Heart right ventricle (tissue), 16 donors: ENCODE measurements at regions of chrX and their contacts with region 1.

Region 1: DNA sequence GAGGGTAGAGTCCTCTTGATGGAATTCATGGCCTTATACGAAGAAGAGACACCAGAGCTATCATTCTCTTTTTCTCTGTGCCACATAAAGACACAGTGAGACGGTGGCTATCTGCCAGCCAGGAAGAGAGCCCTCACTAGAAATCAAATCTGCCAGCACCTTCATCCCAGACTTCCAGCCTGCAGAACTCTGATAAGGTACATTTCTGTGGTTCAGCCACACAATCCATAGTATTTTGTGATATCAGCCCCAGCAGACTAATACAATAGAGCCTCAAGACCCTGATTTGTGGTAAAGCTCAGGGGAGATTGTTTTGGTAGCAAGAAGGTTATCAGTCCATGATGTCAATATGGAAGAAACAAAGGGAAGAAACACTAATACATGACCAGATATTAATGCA is 1213.2 kb downstream of the NLGN4X start:
- DNase-seq: no peak
- ATAC-seq: no peak
- H3K4me3 ChIP-seq: no peak overlapping the region
- H3K27ac ChIP-seq: no peak overlapping the region
- H3K4me1 ChIP-seq: no peaks in the 10 kb centered on the region
- H3K27me3 ChIP-seq: no peaks in the 10 kb centered on the region
- CTCF ChIP-seq: no peak

Region 2: GRCh38 chrX:4484266-4484665 is 531.2 kb before region 1 on chrX:
- intact Hi-C with region 1: no loop called
- DNase-seq: no peak
- ATAC-seq: no peak
- H3K4me3 ChIP-seq: no peak overlapping the region
- H3K27ac ChIP-seq: no peak overlapping the region
- H3K4me1 ChIP-seq: no peaks in the 10 kb centered on the region
- H3K27me3 ChIP-seq: no peaks in the 10 kb centered on the region
- CTCF ChIP-seq: no peak

Region 3: DNA sequence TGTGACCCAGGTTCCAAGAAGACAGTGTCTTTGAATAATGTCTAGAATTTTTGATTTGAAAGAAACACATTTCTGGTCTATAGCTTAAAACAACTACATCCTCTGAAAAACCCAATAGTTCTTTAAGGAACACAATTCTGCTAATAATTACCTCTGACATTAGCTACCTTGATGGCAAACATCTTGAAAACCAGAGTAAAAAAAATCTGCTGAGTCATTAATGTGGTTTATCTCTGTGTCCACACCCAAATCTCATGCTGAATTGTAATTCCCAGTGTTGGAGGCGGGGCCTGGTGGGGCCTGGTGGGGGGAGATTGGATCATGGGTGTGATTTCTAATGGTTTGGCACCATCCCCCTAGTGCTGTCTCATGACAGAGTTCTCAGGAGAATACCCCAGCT is 20.6 kb before region 1 on chrX:
- intact Hi-C with region 1: loop called in 1 of 10 experiments (anchors 1 kb)
- DNase-seq: no peak
- ATAC-seq: no peak
- H3K4me3 ChIP-seq: no peak overlapping the region
- H3K27ac ChIP-seq: no peak overlapping the region
- H3K4me1 ChIP-seq: no peaks in the 10 kb centered on the region
- H3K27me3 ChIP-seq: no peaks in the 10 kb centered on the region
- CTCF ChIP-seq: no peak